ENCODE measurements at regions of chr17 and their contacts with region 1.

Region 1: GRCh38 chr17:4949321-4950074 is 1.2 kb upstream of the PFN1 start:
- DNase-seq: peak; percentile 93

Region 2: DNA sequence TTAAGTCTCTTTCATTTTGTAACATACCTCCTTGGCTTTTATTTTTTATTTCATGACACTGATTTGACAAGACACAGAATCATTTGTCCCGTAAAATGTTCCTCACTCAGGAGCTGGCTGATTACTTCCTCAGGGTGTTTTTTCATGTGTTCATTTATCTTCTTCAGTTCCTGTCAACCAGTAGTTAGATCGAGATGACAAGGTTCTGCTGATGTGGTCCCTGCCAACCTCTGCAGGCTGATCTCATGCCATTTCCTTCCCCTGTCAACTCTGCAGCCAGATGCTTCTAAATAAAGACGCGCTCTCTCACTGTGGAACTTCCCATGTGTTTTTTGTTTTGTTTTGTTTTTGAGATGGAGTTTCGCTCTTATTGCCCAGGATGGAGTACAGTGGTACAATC is 201.7 kb before region 1 on chr17:
- intact Hi-C with region 1: no loop called
- DNase-seq: no peak

Region 3: GRCh38 chr17:5003214-5003867 is 53.8 kb after region 1 on chr17:
- intact Hi-C with region 1: no loop called
- DNase-seq: peak; percentile 67

Region 4: DNA sequence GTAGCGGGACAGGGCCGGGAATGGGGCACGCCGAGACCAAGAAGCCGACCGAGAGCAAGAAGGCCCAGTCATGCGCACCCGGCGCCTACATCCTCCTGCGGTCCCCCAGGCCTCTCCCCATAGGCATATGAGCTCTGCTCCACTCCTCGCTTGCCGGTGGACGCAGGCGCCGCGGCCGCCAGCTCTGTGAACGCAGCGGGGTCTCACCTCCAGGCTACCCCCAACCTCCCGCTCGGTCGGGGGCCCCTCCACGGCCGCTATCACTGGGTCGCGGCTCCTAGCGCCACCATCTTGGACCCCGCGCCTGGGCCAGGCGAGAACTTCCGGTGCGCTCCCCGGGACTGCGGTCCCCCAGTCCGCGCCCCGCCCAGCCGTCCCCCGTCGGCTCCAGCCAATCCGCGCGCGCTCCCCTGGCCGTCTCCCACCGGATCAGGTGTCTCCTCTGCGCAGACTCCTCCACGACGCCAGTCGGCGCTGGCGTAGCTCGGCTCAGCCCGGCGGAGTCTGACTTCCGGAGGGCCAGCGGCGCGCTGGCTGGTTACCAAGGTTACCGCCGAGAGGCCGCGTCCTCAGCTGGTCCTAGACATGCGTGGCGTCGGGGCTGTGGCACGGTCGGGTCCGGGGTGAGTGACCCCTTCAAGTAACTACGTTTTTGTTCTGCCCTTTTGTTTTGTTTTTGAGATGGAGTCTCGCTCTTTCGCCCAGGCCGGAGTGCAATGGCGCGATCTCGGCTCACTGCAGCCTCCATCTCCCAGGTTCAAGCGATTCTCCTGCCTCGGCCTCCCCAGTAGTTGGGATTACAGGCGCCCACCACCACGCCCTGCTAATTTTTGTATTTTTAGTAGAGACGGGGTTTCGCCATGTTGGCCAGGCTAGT is 242.3 kb after region 1 on chr17 and contains the start of gene ZNF594:
- intact Hi-C with region 1: loop called in 1 of 2 experiments (anchors 10 kb)
- DNase-seq: peak; percentile 99
- total RNA-seq, gene ZNF594: 5.7 to 6.8 TPM